HEK293 (cell line): ENCODE measurements at regions of chr11 and their contacts with region 1.

Region 1: DNA sequence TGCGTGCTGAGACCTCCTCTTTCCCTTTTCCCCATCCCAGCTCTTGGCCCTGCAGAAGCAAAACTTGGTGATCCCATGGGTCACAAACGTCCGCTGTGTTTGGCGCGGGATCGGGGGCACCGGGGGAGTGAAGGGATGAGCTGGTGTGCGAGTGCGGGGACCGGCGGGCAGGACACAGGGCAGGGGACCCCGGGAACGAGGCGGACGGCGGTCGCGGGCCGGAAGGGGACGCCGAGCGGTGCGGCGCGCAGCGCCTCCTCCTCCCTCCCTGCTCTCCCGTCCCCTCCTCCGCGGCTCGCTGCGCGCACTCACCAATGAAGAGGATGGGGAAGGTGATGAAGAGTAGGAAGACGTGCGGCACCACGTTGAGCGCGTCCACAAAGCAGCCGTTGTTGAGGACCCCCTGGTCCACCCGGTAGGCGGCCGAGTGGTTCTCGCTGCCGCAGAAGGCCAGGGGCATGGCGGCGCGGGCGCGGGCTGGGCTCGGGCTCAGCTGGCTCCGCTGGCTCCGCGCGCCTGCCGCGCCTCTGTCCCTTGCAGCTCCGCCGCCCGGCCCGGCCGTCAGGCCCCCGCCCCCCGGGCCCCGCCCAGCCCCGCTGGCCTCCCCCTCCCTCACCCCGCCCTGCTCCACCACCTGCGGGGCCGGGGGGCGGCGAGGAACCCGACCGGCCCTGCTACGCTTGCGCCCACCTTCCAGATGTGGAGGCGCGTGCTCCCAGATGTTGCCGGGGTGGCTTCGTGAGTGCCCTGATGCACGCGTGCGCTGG is at the start of gene ABCC8:
- H3K4me3 ChIP-seq: peak within 1 kb of the TSS; percentile 64
- H3K27ac ChIP-seq: no peak within 1 kb of the TSS
- H3K4me1 ChIP-seq: no peaks in the 10 kb centered on the region; the same call in 1 of the 2 replicates
- CTCF ChIP-seq: peak; percentile 29; the same call in 1 of the 2 replicates

Region 2: DNA sequence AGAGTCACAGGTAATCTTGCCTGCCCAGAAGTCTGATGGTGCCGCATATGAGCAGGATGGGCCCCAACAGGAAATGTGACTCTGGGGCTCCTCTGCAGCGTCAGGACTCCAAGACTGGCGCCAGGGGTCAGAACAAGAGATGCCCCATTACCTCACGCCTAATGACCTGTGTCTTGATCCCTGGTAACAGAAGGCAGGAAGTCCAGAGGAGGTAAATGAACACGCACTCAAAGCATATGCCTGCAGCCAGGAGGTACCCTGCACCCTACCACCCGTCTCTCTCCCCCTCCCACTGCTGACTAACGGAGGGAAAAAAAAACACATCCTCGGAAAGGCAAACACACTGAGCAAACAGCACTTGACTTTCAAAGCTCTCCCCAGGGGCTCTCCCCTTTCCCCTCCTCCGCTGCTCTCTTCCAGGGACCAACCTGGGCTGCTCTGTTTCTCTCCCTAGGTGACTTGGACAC is 37.2 kb before region 1 on chr11:
- CTCF ChIA-PET with region 1: interaction called, 4 read pairs
- POLR2A ChIA-PET with region 1: interaction called, 12 read pairs
- H3K4me3 ChIP-seq: no peak overlapping the region
- H3K27ac ChIP-seq: no peak overlapping the region
- H3K4me1 ChIP-seq: peaks cover 7% of the 10 kb centered on the region
- CTCF ChIP-seq: no peak